ENCODE measurements at regions of chr1 and their contacts with region 1.

Region 1: GRCh38 chr1:99180343-99180808 is 83.9 kb upstream of the PLPPR4 start:
- DNase-seq: peak; percentile 70
- H3K4me3 ChIP-seq: no peak overlapping the region
- CTCF ChIP-seq: peak; percentile 75

Region 2: DNA sequence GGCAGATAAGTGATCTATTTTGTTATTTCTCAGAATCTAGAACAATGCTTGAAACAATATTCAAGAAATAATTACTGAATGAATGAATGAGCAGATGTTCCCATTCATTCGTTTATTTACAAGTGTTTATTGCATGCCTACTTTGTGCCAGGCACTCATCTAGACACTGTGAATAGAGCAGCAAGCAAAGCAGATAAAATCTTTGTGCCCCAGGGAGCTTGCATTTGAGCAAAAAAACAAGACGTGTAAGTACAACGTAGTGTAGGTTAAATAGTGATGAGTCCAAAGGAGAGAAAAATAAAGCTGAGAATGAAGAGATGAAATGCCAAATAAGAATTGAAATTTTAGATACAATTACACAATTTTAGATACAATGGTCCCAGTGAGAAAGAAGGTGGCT is 151.9 kb before region 1 on chr1:
- in situ Hi-C with region 1: no loop called
- DNase-seq: no peak
- H3K4me3 ChIP-seq: no peak overlapping the region
- CTCF ChIP-seq: no peak

Region 3: DNA sequence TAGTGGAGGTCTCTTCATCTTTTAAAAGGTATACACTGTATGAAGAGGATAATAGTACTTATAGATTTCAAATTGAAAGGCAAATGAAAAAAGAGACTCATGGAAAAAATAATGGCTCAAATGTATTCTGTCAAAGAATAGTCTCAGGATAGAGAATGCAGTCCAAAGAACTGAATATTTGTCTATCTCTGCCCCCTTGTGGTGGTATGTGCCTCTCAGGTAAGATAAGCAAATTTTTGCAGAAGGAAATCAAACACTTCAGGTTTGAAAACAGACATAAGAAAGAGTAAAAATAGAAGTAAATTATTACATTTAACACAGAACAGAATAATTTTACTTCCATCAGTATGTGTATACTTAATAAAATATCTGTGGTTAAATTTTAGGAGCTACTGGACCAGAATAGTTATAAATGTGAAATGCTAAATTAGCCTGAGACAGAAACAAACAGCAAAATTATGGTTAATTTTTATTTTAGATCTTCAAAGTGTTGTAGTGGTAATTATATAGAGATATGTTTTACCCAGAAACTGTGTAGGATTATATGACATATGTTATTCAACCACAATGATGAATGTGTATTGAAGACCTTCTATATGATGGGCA is 301.1 kb after region 1 on chr1:
- in situ Hi-C with region 1: loop called (anchors 25 kb)
- DNase-seq: peak; percentile 59
- H3K4me3 ChIP-seq: no peak overlapping the region
- CTCF ChIP-seq: peak; percentile 55

Measured in astrocyte of the cerebellum (primary cell).